GM12878 (cell line): ENCODE measurements at regions of chr10 and their contacts with region 1.

Region 1: DNA sequence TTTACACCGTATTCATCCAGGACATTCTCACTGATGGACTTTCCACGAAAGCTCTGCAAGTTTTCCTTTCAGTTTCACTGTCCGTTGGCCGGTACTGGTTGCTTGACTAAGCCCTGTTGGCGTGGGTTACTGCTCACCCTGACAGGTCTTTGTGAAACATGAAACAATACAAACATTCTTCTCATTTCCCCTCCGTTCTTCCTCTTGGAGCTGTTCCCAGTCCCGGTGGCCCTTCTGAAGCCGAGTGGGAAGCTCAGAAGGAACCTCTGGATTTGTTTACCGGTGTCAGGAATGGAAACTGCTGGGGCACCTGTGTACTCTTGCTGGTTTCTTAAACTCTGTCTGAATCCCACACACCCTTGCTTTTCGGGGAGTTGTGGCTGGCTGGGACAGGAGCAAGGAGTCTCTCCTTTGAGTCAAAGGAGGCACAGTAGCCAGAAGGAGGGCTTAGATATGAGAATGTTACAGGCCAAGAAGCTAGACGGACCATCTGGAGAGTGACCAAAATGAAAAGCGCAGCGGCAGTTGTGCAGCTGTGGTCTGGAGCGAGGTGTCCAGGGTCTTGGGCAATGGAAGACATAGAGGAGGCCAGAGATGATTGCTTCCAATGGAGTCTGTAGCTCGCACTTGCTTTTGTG is 45.7 kb downstream of the LYZL2 start:
- DNase-seq: peak; percentile 61
- ATAC-seq: peak; percentile 75
- H3K4me3 ChIP-seq: peak overlapping the region; percentile 54
- H3K27ac ChIP-seq: peak overlapping the region; percentile 39
- H3K4me1 ChIP-seq: peaks cover 22% of the 10 kb centered on the region
- H3K27me3 ChIP-seq: no peaks in the 10 kb centered on the region
- CTCF ChIP-seq: no peak
- EP300 ChIP-seq: no peak
- POLR2A ChIP-seq: no peak
- RAD21 ChIP-seq: no peak

Region 2: GRCh38 chr10:29998142-29998808 is 585.6 kb before region 1 on chr10:
- CTCF ChIA-PET with region 1: interaction called, 6 read pairs
- POLR2A ChIA-PET with region 1: no interaction called
- RAD21 ChIA-PET with region 1: no interaction called
- SMC1A ChIA-PET with region 1: no interaction called
- in situ Hi-C with region 1: loop called (anchors 10 kb)
- intact Hi-C with region 1: no loop called
- DNase-seq: peak; percentile 30
- ATAC-seq: peak; percentile 93
- H3K4me3 ChIP-seq: no peak overlapping the region
- H3K27ac ChIP-seq: no peak overlapping the region
- H3K4me1 ChIP-seq: no peaks in the 10 kb centered on the region
- H3K27me3 ChIP-seq: peaks cover 0 to 1% of the 10 kb centered on the region in 2 experiments; a peak in 2 of 4 replicates
- CTCF ChIP-seq: peak; percentile 99 to 100 (median 99); a peak in 5 of 6 replicates
- EP300 ChIP-seq: no peak
- POLR2A ChIP-seq: no peak
- RAD21 ChIP-seq: peak; percentile 99

Region 3: DNA sequence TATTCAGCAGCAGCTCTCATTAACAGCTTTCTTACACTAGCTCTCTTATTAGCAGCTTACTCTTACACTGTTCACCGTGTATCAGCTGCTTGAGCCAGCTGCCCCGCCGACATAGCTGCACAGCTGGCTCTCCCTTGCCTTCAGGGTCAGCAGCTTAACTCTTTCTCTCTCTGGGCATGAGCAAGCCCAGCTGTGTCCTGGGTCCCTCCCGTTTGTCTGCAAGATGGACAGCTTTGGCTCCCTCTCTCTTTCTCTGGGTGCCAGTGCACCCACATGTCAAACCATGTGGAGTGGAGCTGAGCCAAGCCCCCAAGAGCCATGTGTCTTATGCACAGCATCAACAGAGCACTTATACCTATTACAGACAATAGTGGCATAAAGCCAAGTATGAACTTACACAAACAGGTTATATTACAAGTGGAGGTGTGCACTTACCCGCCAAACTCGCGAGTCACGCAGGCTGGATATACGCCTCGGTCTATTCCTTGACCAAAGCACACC is 199.1 kb before region 1 on chr10:
- CTCF ChIA-PET with region 1: interaction called, 221 read pairs
- POLR2A ChIA-PET with region 1: no interaction called
- RAD21 ChIA-PET with region 1: interaction called, 4 read pairs
- SMC1A ChIA-PET with region 1: interaction called, 4 read pairs
- in situ Hi-C with region 1: no loop called
- intact Hi-C with region 1: no loop called
- DNase-seq: no peak
- ATAC-seq: peak; percentile 89
- H3K4me3 ChIP-seq: no peak overlapping the region
- H3K27ac ChIP-seq: no peak overlapping the region
- H3K4me1 ChIP-seq: no peaks in the 10 kb centered on the region
- H3K27me3 ChIP-seq: no peaks in the 10 kb centered on the region; a peak in 2 of 4 replicates
- CTCF ChIP-seq: peak; percentile 43 to 54 (median 48); a peak in 5 of 6 replicates
- EP300 ChIP-seq: no peak
- POLR2A ChIP-seq: no peak
- RAD21 ChIP-seq: no peak; the same call in 1 of the 2 replicates

Region 4: GRCh38 chr10:30413996-30414576 is 169.8 kb before region 1 on chr10:
- CTCF ChIA-PET with region 1: interaction called, 16 read pairs
- POLR2A ChIA-PET with region 1: no interaction called
- RAD21 ChIA-PET with region 1: interaction called, 7 read pairs
- SMC1A ChIA-PET with region 1: interaction called, 5 read pairs
- in situ Hi-C with region 1: no loop called
- intact Hi-C with region 1: no loop called
- DNase-seq: no peak
- ATAC-seq: peak; percentile 71
- H3K4me3 ChIP-seq: no peak overlapping the region
- H3K27ac ChIP-seq: no peak overlapping the region
- H3K4me1 ChIP-seq: peaks cover 28% of the 10 kb centered on the region
- H3K27me3 ChIP-seq: no peaks in the 10 kb centered on the region
- CTCF ChIP-seq: peak; percentile 78 to 87 (median 84)
- EP300 ChIP-seq: no peak
- POLR2A ChIP-seq: no peak
- RAD21 ChIP-seq: peak; percentile 97

Region 5: GRCh38 chr10:30534465-30535144 is 49.3 kb before region 1 on chr10:
- CTCF ChIA-PET with region 1: interaction called, 42 read pairs
- POLR2A ChIA-PET with region 1: interaction called, 4 read pairs
- RAD21 ChIA-PET with region 1: interaction called, 7 read pairs
- SMC1A ChIA-PET with region 1: interaction called, 41 read pairs
- in situ Hi-C with region 1: no loop called
- intact Hi-C with region 1: no loop called
- DNase-seq: no peak
- ATAC-seq: peak; percentile 56
- H3K4me3 ChIP-seq: no peak overlapping the region
- H3K27ac ChIP-seq: no peak overlapping the region
- H3K4me1 ChIP-seq: peaks cover 6% of the 10 kb centered on the region
- H3K27me3 ChIP-seq: no peaks in the 10 kb centered on the region
- CTCF ChIP-seq: peak; percentile 80 to 88 (median 84)
- EP300 ChIP-seq: no peak
- POLR2A ChIP-seq: no peak
- RAD21 ChIP-seq: peak; percentile 96

Region 6: DNA sequence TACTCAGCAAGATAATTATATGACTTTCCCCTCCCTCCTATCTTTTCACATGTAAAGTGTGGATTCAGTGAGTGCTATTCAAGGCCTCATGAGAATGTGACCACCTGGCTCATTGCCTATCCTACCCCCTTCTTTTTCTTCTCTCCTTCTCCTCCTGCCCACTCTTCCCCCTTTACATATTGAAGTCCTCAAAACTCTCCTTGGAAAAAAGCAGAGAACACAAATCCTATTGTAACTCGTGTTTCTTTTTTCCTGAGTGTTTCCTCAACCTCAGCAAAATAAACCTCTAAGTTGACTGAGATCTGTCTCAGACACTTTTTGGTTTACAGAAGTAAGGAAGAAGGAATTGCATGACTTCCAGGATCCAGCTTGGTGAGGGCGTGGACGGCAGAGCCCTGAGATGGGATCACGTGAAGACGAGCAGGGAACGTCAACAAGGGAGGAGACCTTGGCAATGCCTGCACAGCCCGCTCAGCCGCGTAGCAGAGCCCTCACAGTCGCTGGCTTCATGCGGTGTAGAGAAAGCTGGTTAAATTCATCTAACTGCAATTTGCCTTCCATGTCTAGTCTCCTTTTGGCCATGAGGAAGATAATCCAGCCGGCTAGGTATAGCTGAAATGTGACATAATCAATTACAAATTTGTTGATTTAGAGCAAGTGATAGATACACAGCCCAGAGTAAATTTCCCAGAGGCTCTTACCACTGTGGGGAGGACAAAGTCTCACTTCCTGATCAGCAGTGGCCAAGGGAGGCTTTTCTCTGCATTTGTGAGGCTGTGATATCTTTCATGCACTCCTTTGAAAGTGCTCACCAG is 30.1 kb before region 1 on chr10:
- CTCF ChIA-PET with region 1: interaction called, 15 read pairs
- POLR2A ChIA-PET with region 1: interaction called, 3 read pairs
- RAD21 ChIA-PET with region 1: no interaction called
- SMC1A ChIA-PET with region 1: interaction called, 3 read pairs
- in situ Hi-C with region 1: no loop called
- intact Hi-C with region 1: no loop called
- DNase-seq: no peak
- ATAC-seq: peak; percentile 41; the same call in 2 of the 3 replicates
- H3K4me3 ChIP-seq: no peak overlapping the region
- H3K27ac ChIP-seq: no peak overlapping the region
- H3K4me1 ChIP-seq: peaks cover 5% of the 10 kb centered on the region
- H3K27me3 ChIP-seq: no peaks in the 10 kb centered on the region
- CTCF ChIP-seq: no peak
- EP300 ChIP-seq: no peak
- POLR2A ChIP-seq: no peak
- RAD21 ChIP-seq: no peak

Region 7: DNA sequence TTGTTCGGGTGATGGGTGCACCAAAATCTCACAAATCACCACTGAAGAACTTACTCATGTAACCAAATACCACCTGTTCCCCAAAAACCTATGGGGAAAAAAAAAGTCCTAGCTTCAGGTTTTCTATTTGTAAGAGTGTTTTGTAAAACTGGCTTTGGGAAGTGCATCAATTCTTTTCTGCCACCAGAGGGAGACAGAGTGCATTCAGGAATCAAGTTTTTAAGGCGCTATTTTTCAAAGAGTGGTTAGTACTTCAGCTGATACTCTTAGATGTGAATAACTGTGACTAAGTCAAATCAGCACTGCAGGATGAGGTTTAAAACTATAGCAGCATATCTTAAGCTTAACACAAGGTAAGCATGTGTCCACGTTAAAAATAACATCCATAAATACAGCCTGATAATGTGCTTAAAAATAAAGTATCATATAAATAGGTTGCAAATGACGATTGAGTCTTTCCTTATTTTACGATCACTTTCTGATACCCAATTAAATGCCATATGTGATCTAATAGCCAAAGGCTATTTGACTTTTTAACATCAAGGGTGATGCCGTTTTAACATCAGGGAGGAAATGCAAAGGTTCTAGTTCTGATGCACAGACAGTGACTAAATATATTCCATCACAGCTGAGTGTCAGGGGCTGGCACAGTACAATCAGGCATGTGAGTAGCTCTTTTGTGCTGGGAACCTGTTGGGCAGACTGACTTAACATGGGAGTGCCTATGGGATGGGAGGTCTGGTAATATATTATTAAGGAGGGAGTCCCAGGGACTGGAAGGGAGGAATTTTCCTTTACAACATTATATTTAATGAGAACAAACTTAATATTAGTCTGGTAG is 56.3 kb after region 1 on chr10:
- CTCF ChIA-PET with region 1: interaction called, 37 read pairs
- POLR2A ChIA-PET with region 1: no interaction called
- RAD21 ChIA-PET with region 1: interaction called, 4 read pairs
- SMC1A ChIA-PET with region 1: interaction called, 7 read pairs
- in situ Hi-C with region 1: no loop called
- intact Hi-C with region 1: no loop called
- DNase-seq: no peak
- ATAC-seq: peak; percentile 37; the same call in 1 of the 3 replicates
- H3K4me3 ChIP-seq: no peak overlapping the region
- H3K27ac ChIP-seq: no peak overlapping the region
- H3K4me1 ChIP-seq: no peaks in the 10 kb centered on the region
- H3K27me3 ChIP-seq: peaks cover 0 to 1% of the 10 kb centered on the region in 2 experiments; a peak in 3 of 4 replicates
- CTCF ChIP-seq: peak; percentile 78 to 81 (median 81)
- EP300 ChIP-seq: no peak
- POLR2A ChIP-seq: no peak
- RAD21 ChIP-seq: peak; percentile 56